AG04450 (cell line): ENCODE measurements at regions of chr6 and their contacts with region 1.

Region 1: DNA sequence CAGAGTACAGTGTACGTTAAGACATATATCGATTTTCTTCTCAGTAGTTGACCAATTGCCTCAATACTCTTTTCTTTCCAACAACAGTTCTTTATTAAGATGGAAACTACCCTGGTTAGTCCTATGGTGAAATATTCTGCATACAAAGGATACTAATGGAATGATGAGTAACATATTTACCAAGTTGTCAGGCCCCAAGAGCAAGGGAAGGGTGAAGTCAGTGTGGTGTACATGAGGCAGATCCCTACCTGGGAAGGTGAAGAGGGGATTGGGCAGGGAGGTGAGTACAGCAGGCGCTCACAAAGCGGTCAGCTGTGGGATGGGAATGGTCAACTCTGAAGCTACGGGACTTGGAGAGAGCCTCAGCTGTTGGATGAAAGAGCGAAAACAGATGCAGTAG is 29.7 kb downstream of the GJA1 start:
- DNase-seq: no peak
- H3K4me3 ChIP-seq: no peak overlapping the region
- H3K27ac ChIP-seq: no peak overlapping the region
- H3K27me3 ChIP-seq: no peaks in the 10 kb centered on the region
- CTCF ChIP-seq: no peak

Region 2: GRCh38 chr6:121436960-121437850 is 27.9 kb before region 1 on chr6:
- CTCF ChIA-PET with region 1: interaction called, 6 read pairs
- POLR2A ChIA-PET with region 1: interaction called, 12 read pairs
- DNase-seq: peak; percentile 11
- H3K4me3 ChIP-seq: peak overlapping the region; percentile 87
- H3K27ac ChIP-seq: peak overlapping the region; percentile 83
- H3K27me3 ChIP-seq: no peaks in the 10 kb centered on the region
- CTCF ChIP-seq: no peak

Region 3: GRCh38 chr6:121521892-121522664 is 57.0 kb after region 1 on chr6:
- CTCF ChIA-PET with region 1: no interaction called
- POLR2A ChIA-PET with region 1: no interaction called
- DNase-seq: peak; percentile 86
- H3K4me3 ChIP-seq: no peak overlapping the region
- H3K27ac ChIP-seq: peak overlapping the region; percentile 86
- H3K27me3 ChIP-seq: no peaks in the 10 kb centered on the region
- CTCF ChIP-seq: no peak